ENCODE measurements at regions of chr17 and their contacts with region 1.

Region 1: GRCh38 chr17:82457997-82458864 is at the start of gene NARF:
- DNase-seq: peak; percentile 89 to 98 (median 95)
- ATAC-seq: peak; percentile 97
- H3K4me3 ChIP-seq: peak within 1 kb of the TSS; percentile 67 to 76
- H3K4me3 Mint-ChIP-seq: peak within 1 kb of the TSS; percentile 87
- H3K27ac ChIP-seq: peak within 1 kb of the TSS; percentile 96 to 97
- H3K27ac Mint-ChIP-seq: peak within 1 kb of the TSS; percentile 97
- H3K4me1 ChIP-seq: peaks cover 17% of the 10 kb centered on the region
- H3K4me1 Mint-ChIP-seq: peaks cover 29% of the 10 kb centered on the region
- H3K27me3 ChIP-seq: no peaks in the 10 kb centered on the region
- H3K27me3 Mint-ChIP-seq: no peaks in the 10 kb centered on the region
- CTCF ChIP-seq: no peak
- total RNA-seq, gene NARF: 60.0 to 60.1 TPM

Region 2: DNA sequence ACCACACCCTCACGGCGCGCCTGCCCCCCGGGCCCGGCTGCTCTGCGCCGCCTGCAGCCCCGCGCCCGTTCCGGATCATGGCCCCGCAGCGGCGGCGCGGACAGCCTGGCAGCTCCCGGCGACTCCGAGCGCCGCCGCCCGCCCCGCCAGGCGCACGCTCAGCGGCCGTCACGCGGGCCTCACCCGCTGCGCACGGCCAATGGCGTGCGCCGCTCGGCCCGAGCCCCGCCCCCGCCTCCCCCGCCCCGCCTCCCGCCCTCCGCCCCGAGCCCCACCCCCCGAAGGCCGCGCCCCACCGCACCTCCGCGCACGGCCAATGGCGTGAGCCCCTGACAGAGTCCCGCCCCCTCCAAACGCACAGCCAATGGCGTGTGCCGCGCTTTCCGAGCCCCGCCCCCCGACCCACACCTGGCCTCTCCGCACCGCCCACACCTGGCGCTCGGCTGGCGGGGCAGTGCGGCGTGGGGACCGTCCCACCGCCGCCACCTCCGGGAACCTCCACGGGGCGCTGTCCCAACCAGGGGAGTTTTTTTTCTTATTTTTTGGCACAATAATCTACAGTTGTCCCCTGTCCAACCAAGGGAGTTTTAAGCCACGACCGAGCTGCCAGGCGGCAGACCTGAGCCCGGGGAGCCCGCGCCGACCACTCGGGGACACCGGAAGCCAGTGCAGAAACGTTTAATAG is 546.8 kb before region 1 on chr17 and contains the start of gene PCYT2:
- CTCF ChIA-PET with region 1: no interaction called
- POLR2A ChIA-PET with region 1: no interaction called
- intact Hi-C with region 1: loop called in 1 of 2 experiments (anchors 10 kb)
- DNase-seq: peak; percentile 85 to 97 (median 94)
- ATAC-seq: peak; percentile 94
- H3K4me3 ChIP-seq: peak within 1 kb of the TSS; percentile 68 to 73
- H3K4me3 Mint-ChIP-seq: peak within 1 kb of the TSS; percentile 85
- H3K27ac ChIP-seq: peak within 1 kb of the TSS; percentile 31 to 37
- H3K27ac Mint-ChIP-seq: peak within 1 kb of the TSS; percentile 55
- H3K4me1 ChIP-seq: peaks cover 18% of the 10 kb centered on the region
- H3K4me1 Mint-ChIP-seq: peaks cover 20% of the 10 kb centered on the region
- H3K27me3 ChIP-seq: no peaks in the 10 kb centered on the region
- H3K27me3 Mint-ChIP-seq: no peaks in the 10 kb centered on the region
- CTCF ChIP-seq: no peak
- total RNA-seq, gene PCYT2: 18.0 to 18.1 TPM

Region 3: GRCh38 chr17:82494236-82495055 is 36.2 kb after region 1 on chr17:
- CTCF ChIA-PET with region 1: no interaction called
- POLR2A ChIA-PET with region 1: no interaction called
- intact Hi-C with region 1: loop called (anchors 1 to 2 kb)
- DNase-seq: peak; percentile 79 to 94 (median 90)
- ATAC-seq: peak; percentile 76
- H3K4me3 ChIP-seq: no peak overlapping the region
- H3K4me3 Mint-ChIP-seq: peak overlapping the region; percentile 68
- H3K27ac ChIP-seq: peak overlapping the region in 1 of 2 experiments; percentile 57
- H3K27ac Mint-ChIP-seq: peak overlapping the region; percentile 80
- H3K4me1 ChIP-seq: peaks cover 19% of the 10 kb centered on the region
- H3K4me1 Mint-ChIP-seq: peaks cover 24% of the 10 kb centered on the region
- H3K27me3 ChIP-seq: no peaks in the 10 kb centered on the region
- H3K27me3 Mint-ChIP-seq: no peaks in the 10 kb centered on the region
- CTCF ChIP-seq: peak; percentile 67

Region 4: GRCh38 chr17:82648166-82648668 is 190.0 kb after region 1 on chr17 and contains the start of gene WDR45B:
- CTCF ChIA-PET with region 1: no interaction called
- POLR2A ChIA-PET with region 1: no interaction called
- intact Hi-C with region 1: loop called in 1 of 2 experiments (anchors 2 kb)
- DNase-seq: peak; percentile 76 to 96 (median 87)
- ATAC-seq: peak; percentile 83
- H3K4me3 ChIP-seq: peak within 1 kb of the TSS; percentile 61 to 96
- H3K4me3 Mint-ChIP-seq: peak within 1 kb of the TSS; percentile 89
- H3K27ac ChIP-seq: peak within 1 kb of the TSS; percentile 91 to 95
- H3K27ac Mint-ChIP-seq: peak within 1 kb of the TSS; percentile 91
- H3K4me1 ChIP-seq: peaks cover 21% of the 10 kb centered on the region
- H3K4me1 Mint-ChIP-seq: peaks cover 31% of the 10 kb centered on the region
- H3K27me3 ChIP-seq: no peaks in the 10 kb centered on the region
- H3K27me3 Mint-ChIP-seq: no peaks in the 10 kb centered on the region
- CTCF ChIP-seq: no peak
- total RNA-seq, gene WDR45B: 103 to 107 TPM

Region 5: DNA sequence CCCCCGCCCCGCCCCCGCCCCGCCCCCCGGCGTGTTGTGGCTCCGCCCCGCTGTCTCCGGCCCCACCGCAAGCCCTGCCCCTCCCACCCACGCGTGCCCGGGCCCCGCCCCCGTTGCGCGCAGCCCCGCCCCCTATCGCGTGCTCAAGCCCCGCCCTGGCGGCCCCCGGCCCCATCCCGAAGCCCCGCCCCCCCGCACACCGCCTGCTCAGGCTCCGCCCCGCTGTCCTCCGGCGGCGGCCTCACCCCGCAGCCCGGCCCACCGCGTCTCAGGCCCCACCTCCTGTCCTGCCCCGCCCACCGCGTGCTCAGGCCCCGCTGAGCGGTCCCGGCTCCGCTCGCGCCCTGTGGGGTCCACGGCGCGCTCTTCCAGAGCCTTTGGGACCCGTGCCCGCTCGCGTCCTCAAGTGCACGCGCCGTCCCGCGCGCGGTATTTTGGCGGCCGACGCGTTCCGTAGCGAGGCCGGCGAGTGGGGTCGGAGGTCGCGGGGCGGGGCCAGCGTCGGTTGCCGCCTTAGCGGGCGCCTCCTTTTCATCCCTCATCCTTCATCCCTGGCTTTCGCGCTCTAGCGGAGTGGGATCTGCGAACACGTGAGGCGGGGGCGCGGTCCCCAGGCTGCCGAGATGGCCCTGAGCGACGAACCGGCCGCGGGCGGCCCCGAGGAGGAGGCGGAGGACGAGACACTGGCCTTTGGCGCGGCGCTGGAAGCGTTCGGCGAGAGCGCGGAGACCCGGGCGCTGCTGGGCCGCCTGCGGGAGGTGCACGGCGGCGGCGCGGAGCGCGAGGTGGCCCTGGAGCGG is 293.5 kb after region 1 on chr17 and contains the start of gene TBCD:
- CTCF ChIA-PET with region 1: no interaction called
- POLR2A ChIA-PET with region 1: no interaction called
- intact Hi-C with region 1: loop called in 1 of 2 experiments (anchors 1 kb)
- DNase-seq: peak; percentile 74 to 93 (median 84)
- ATAC-seq: peak; percentile 82
- H3K4me3 ChIP-seq: peak within 1 kb of the TSS; percentile 68 to 90
- H3K4me3 Mint-ChIP-seq: peak within 1 kb of the TSS; percentile 82
- H3K27ac ChIP-seq: peak within 1 kb of the TSS; percentile 25 to 61
- H3K27ac Mint-ChIP-seq: peak within 1 kb of the TSS; percentile 41
- H3K4me1 ChIP-seq: peaks cover 17% of the 10 kb centered on the region
- H3K4me1 Mint-ChIP-seq: peaks cover 28% of the 10 kb centered on the region
- H3K27me3 ChIP-seq: no peaks in the 10 kb centered on the region
- H3K27me3 Mint-ChIP-seq: no peaks in the 10 kb centered on the region
- CTCF ChIP-seq: no peak
- total RNA-seq, gene TBCD: 78.3 to 91.2 TPM